HCT116 (cell line): ENCODE measurements at regions of chr12 and their contacts with region 1.

Region 1: GRCh38 chr12:116697305-116697704 is 40.6 kb downstream of the SPRING1 start:
- DNase-seq: peak; percentile 40
- ATAC-seq: peak; percentile 97
- H3K4me3 ChIP-seq: no peak overlapping the region
- H3K27ac ChIP-seq: no peak overlapping the region
- H3K4me1 ChIP-seq: no peaks in the 10 kb centered on the region
- H3K27me3 ChIP-seq: no peaks in the 10 kb centered on the region
- CTCF ChIP-seq: peak; percentile 67 to 73 (median 70)
- POLR2A ChIP-seq: no peak
- RAD21 ChIP-seq: peak; percentile 89

Region 2: GRCh38 chr12:116066381-116067230 is 630.7 kb before region 1 on chr12:
- CTCF ChIA-PET with region 1: no interaction called
- POLR2A ChIA-PET with region 1: no interaction called
- RAD21 ChIA-PET with region 1: no interaction called
- intact Hi-C with region 1: loop called (anchors 5 kb)
- DNase-seq: peak; percentile 33
- ATAC-seq: peak; percentile 79
- H3K4me3 ChIP-seq: no peak overlapping the region
- H3K27ac ChIP-seq: no peak overlapping the region
- H3K4me1 ChIP-seq: peaks cover 2 to 7% of the 10 kb centered on the region in 2 experiments; a peak in 2 of 4 replicates
- H3K27me3 ChIP-seq: no peaks in the 10 kb centered on the region
- CTCF ChIP-seq: peak; percentile 58 to 88 (median 86); a peak in 5 of 6 replicates
- POLR2A ChIP-seq: no peak
- RAD21 ChIP-seq: peak; percentile 64

Region 3: DNA sequence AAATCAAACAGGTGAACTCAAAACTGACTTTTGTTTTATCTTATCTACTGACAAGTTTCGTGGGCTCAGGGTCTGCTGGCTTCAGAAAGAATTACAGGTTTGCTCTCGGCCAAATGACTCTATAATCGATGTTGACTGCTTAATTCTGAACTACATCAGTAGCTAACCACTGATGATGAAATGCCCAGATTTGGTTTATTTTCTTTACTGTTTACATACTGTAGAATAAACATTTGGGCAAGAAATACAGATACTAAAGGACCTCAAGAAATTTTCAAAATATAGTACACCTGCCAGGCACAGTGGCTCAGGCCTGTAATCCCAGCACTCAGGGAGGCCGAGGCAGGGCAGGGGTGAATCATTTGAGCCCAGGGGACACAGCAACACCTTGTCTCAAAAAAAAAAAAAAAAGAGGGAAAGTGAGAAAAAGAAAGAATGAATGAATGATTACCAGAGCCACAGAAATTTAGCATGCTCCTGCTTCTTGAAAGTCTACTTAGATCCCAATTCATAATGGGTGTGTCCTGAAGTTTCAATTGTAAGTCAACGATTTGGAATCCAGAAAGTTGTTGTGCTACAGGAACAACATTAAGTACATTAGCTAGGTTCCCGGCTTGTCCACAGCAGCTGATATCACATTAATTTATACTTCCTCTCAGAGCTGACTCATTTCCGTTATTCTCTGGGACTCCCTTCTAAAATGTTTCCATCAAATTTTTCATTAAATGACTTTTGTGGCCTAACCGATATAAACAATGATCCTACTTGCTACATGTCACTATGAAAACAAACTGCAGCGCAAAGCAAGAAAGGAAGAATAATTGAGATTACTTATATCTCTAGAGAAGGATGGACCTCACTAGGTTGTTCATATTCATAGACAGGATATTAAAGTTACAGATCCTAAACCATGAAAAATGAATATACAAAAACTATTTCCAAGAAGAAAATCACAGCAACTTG is 554.1 kb before region 1 on chr12:
- CTCF ChIA-PET with region 1: interaction called, 7 read pairs
- POLR2A ChIA-PET with region 1: no interaction called
- RAD21 ChIA-PET with region 1: no interaction called
- intact Hi-C with region 1: loop called (anchors 5 kb)
- DNase-seq: no peak
- ATAC-seq: no peak
- H3K4me3 ChIP-seq: no peak overlapping the region
- H3K27ac ChIP-seq: peak overlapping the region; percentile 21; the same call in 1 of the 2 replicates
- H3K4me1 ChIP-seq: peaks cover 30 to 74% of the 10 kb centered on the region in 2 experiments
- H3K27me3 ChIP-seq: no peaks in the 10 kb centered on the region
- CTCF ChIP-seq: no peak
- POLR2A ChIP-seq: no peak
- RAD21 ChIP-seq: no peak

Region 4: DNA sequence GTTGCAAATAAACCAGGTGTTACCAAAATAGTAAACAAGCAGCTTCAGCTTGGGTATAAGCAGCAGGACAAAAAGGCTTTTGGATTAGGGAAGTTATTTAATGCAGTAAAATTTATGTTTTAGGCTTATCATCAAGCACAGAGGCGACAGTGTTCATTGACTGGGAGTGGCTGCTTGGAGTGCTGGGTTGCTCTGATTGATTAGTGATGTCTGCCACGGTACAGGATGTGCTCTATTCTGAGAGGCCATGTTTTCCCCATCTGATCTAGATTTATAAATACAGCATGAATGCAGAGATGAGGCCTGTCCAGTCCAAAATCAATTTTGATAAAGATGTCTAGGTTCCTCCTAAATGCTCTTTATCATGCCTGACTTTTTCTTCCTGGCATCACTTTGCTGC is 54.6 kb before region 1 on chr12:
- CTCF ChIA-PET with region 1: no interaction called
- POLR2A ChIA-PET with region 1: no interaction called
- RAD21 ChIA-PET with region 1: no interaction called
- intact Hi-C with region 1: no loop called
- DNase-seq: no peak
- ATAC-seq: no peak
- H3K4me3 ChIP-seq: no peak overlapping the region
- H3K27ac ChIP-seq: no peak overlapping the region
- H3K4me1 ChIP-seq: peaks cover 0 to 10% of the 10 kb centered on the region in 2 experiments; a peak in 1 of 4 replicates
- H3K27me3 ChIP-seq: no peaks in the 10 kb centered on the region
- CTCF ChIP-seq: no peak
- POLR2A ChIP-seq: no peak
- RAD21 ChIP-seq: no peak